ENCODE measurements at regions of chr4 and their contacts with region 1.

Region 1: GRCh38 chr4:168710353-168710946 is 213.6 kb downstream of the PALLD start:
- DNase-seq: peak; percentile 61
- H3K4me3 Mint-ChIP-seq: no peak overlapping the region
- H3K27ac Mint-ChIP-seq: no peak overlapping the region
- H3K4me1 Mint-ChIP-seq: peaks cover 11% of the 10 kb centered on the region
- H3K27me3 Mint-ChIP-seq: peaks cover 6% of the 10 kb centered on the region

Region 2: DNA sequence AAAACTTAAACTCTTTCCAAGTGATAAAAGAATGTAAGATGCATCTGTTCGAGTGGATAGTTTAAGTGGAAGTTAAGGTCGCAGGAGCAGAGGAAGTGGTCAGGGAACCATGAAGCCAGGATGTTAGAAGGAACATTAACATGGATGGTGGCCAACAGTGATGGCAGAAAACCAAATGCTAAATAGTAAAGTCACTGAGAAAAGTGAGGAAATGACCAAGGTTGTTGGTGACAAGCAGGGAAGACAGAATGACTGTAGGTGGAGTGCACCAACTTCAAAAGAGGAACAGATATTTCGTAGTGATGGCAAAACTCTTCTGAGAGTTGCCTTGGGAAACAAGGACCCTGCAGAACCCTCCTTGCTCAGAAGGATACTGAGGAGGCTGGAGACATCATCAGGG is 12.6 kb after region 1 on chr4:
- intact Hi-C with region 1: loop called (anchors 1 kb)
- DNase-seq: no peak
- H3K4me3 Mint-ChIP-seq: peak overlapping the region; percentile 29
- H3K27ac Mint-ChIP-seq: peak overlapping the region; percentile 79
- H3K4me1 Mint-ChIP-seq: peaks cover 24% of the 10 kb centered on the region
- H3K27me3 Mint-ChIP-seq: peaks cover 2% of the 10 kb centered on the region

Region 3: GRCh38 chr4:168871632-168872031 is 161.2 kb after region 1 on chr4:
- intact Hi-C with region 1: loop called (anchors 5 kb)
- DNase-seq: no peak
- H3K4me3 Mint-ChIP-seq: no peak overlapping the region
- H3K27ac Mint-ChIP-seq: no peak overlapping the region
- H3K4me1 Mint-ChIP-seq: peaks cover 32% of the 10 kb centered on the region
- H3K27me3 Mint-ChIP-seq: peaks cover 18% of the 10 kb centered on the region

Region 4: GRCh38 chr4:168942985-168943384 is 232.5 kb after region 1 on chr4:
- intact Hi-C with region 1: no loop called
- DNase-seq: peak; percentile 62
- H3K4me3 Mint-ChIP-seq: no peak overlapping the region
- H3K27ac Mint-ChIP-seq: no peak overlapping the region
- H3K4me1 Mint-ChIP-seq: no peaks in the 10 kb centered on the region
- H3K27me3 Mint-ChIP-seq: peaks cover 2% of the 10 kb centered on the region